ENCODE measurements at regions of chr19 and their contacts with region 1.

Region 1: GRCh38 chr19:4172861-4173473 is 9.4 kb downstream of the SIRT6 start:
- H3K4me3 Mint-ChIP-seq: no peak overlapping the region
- H3K27ac Mint-ChIP-seq: no peak overlapping the region
- H3K4me1 Mint-ChIP-seq: peaks cover 5% of the 10 kb centered on the region
- H3K27me3 Mint-ChIP-seq: peaks cover 24% of the 10 kb centered on the region

Region 2: GRCh38 chr19:3879656-3880055 is 293.3 kb before region 1 on chr19:
- intact Hi-C with region 1: loop called (anchors 10 kb)
- H3K4me3 Mint-ChIP-seq: no peak overlapping the region
- H3K27ac Mint-ChIP-seq: no peak overlapping the region
- H3K4me1 Mint-ChIP-seq: peaks cover 5% of the 10 kb centered on the region
- H3K27me3 Mint-ChIP-seq: peaks cover 49% of the 10 kb centered on the region

Measured in dendritic cell treated with granulocyte-macrophage colony-stimulating factor and Interleukin-4, amounts not matched to agents 40 ng/mL and 50 ng/mL, for 4 days (primary cell).